GM18951 (cell line): ENCODE measurements at regions of chr2 and their contacts with region 1.

Region 1: DNA sequence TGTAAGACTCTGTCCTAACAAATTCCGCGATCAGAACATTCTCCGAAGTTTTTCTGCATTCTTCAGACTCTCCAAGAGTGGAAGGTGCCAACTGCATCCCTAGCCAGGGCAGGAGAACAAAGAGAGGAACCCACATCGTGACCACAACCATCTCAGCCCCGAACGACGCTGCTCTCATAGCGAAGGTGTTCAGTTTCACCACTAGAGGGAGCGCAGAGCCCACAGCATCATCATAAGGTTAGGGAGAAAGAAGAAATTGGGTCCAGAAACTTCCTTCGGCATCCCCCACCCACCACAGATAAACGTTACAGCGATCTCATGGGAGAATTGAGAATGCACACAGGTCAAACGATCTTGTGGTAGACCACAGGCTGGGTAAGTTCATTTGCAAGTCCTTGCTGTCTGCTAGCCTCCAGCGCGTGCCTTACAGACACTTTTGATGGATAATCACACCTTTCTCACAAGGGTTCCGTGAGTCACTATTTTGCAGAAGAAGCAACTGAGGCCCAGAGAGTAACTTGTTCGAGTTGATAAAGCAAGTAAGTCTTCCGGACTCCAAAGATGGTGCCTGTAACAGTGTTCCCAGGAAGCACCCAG is 53.7 kb upstream of the ARL4C start:
- POLR2A ChIP-seq: no peak

Region 2: GRCh38 chr2:235129850-235130249 is 579.2 kb after region 1 on chr2:
- in situ Hi-C with region 1: loop called (anchors 10 kb)
- POLR2A ChIP-seq: no peak